B cell (primary cell): ENCODE measurements at regions of chr6 and their contacts with region 1.

Region 1: GRCh38 chr6:99473730-99474129 is 41.5 kb downstream of the USP45 start:
- DNase-seq: no peak
- ATAC-seq: no peak
- H3K4me3 ChIP-seq: no peak overlapping the region
- H3K4me3 Mint-ChIP-seq: no peak overlapping the region
- H3K27ac ChIP-seq: no peak overlapping the region
- H3K27ac Mint-ChIP-seq: no peak overlapping the region
- H3K4me1 ChIP-seq: no peaks in the 10 kb centered on the region
- H3K4me1 Mint-ChIP-seq: no peaks in the 10 kb centered on the region
- H3K27me3 ChIP-seq: no peaks in the 10 kb centered on the region
- H3K27me3 Mint-ChIP-seq: no peaks in the 10 kb centered on the region
- CTCF ChIP-seq: no peak

Region 2: DNA sequence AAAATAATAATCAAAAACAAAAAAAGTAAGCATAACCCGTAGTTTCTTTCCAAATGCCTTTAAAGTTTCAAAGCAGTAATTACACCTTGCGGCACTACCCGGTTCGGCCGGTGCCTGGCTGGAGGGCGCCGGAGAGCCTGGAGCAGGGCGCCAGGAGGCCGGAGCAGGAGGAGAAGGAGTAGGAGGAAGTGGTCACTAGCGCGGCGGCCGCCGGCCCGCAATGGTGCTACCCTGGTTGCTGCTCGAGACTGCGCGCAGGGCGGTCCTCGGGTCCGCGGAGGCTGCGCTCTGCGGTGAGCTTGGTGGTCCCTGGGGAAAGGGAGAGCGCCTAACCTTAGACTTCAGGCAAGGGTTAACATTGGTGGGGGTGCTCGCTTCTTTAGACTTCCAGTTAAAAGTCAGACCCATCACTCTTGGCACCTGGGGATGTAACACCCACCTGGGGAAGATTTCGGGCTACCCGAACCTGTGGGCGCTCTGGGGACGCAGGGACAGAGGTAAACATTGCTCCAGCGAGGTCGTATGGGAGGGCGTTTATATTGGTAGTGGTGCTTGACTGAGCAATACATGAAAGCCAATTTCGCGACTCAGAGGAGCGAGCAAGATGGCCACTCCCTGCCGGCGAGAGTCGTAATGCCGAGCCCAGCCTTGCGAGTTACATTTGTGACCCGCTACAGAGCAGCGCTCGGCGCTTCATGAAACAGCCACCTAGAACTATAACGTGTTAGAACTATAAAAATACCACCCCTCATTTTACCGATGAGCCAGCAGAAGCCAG is 47.3 kb after region 1 on chr6:
- CTCF ChIA-PET with region 1: interaction called, 14 read pairs
- POLR2A ChIA-PET with region 1: interaction called, 12 read pairs
- intact Hi-C with region 1: no loop called
- DNase-seq: peak; percentile 79
- ATAC-seq: peak; percentile 86
- H3K4me3 ChIP-seq: peak overlapping the region; percentile 77 to 97 (median 79)
- H3K4me3 Mint-ChIP-seq: peak overlapping the region; percentile 99
- H3K27ac ChIP-seq: peak overlapping the region; percentile 54 to 62
- H3K27ac Mint-ChIP-seq: peak overlapping the region; percentile 98
- H3K4me1 ChIP-seq: peaks cover 11 to 15% of the 10 kb centered on the region in 2 donors
- H3K4me1 Mint-ChIP-seq: peaks cover 39% of the 10 kb centered on the region
- H3K27me3 ChIP-seq: no peaks in the 10 kb centered on the region
- H3K27me3 Mint-ChIP-seq: no peaks in the 10 kb centered on the region
- CTCF ChIP-seq: peak; percentile 96

Region 3: GRCh38 chr6:99689916-99690685 is 216.4 kb after region 1 on chr6:
- CTCF ChIA-PET with region 1: no interaction called
- POLR2A ChIA-PET with region 1: no interaction called
- intact Hi-C with region 1: no loop called
- DNase-seq: no peak
- ATAC-seq: no peak
- H3K4me3 ChIP-seq: no peak overlapping the region
- H3K4me3 Mint-ChIP-seq: no peak overlapping the region
- H3K27ac ChIP-seq: no peak overlapping the region
- H3K27ac Mint-ChIP-seq: no peak overlapping the region
- H3K4me1 ChIP-seq: no peaks in the 10 kb centered on the region
- H3K4me1 Mint-ChIP-seq: no peaks in the 10 kb centered on the region
- H3K27me3 ChIP-seq: no peaks in the 10 kb centered on the region
- H3K27me3 Mint-ChIP-seq: peaks cover 19% of the 10 kb centered on the region
- CTCF ChIP-seq: no peak

Region 4: GRCh38 chr6:99836471-99836870 is 362.7 kb after region 1 on chr6:
- CTCF ChIA-PET with region 1: no interaction called
- POLR2A ChIA-PET with region 1: no interaction called
- intact Hi-C with region 1: no loop called
- DNase-seq: no peak
- ATAC-seq: no peak
- H3K4me3 ChIP-seq: no peak overlapping the region
- H3K4me3 Mint-ChIP-seq: no peak overlapping the region
- H3K27ac ChIP-seq: no peak overlapping the region
- H3K27ac Mint-ChIP-seq: no peak overlapping the region
- H3K4me1 ChIP-seq: no peaks in the 10 kb centered on the region
- H3K4me1 Mint-ChIP-seq: no peaks in the 10 kb centered on the region
- H3K27me3 ChIP-seq: peaks cover 0 to 3% (median 0%) of the 10 kb centered on the region in 4 experiments
- H3K27me3 Mint-ChIP-seq: peaks cover 5% of the 10 kb centered on the region
- CTCF ChIP-seq: no peak